ENCODE measurements at regions of chr19 and their contacts with region 1.

Region 1: GRCh38 chr19:11505032-11505503 is 571 bp downstream of the ZNF653 start:
- DNase-seq: peak; percentile 95
- H3K4me3 Mint-ChIP-seq: peak overlapping the region; percentile 85
- H3K27ac Mint-ChIP-seq: peak overlapping the region; percentile 80
- H3K4me1 Mint-ChIP-seq: peaks cover 12% of the 10 kb centered on the region
- H3K27me3 Mint-ChIP-seq: no peaks in the 10 kb centered on the region

Region 2: DNA sequence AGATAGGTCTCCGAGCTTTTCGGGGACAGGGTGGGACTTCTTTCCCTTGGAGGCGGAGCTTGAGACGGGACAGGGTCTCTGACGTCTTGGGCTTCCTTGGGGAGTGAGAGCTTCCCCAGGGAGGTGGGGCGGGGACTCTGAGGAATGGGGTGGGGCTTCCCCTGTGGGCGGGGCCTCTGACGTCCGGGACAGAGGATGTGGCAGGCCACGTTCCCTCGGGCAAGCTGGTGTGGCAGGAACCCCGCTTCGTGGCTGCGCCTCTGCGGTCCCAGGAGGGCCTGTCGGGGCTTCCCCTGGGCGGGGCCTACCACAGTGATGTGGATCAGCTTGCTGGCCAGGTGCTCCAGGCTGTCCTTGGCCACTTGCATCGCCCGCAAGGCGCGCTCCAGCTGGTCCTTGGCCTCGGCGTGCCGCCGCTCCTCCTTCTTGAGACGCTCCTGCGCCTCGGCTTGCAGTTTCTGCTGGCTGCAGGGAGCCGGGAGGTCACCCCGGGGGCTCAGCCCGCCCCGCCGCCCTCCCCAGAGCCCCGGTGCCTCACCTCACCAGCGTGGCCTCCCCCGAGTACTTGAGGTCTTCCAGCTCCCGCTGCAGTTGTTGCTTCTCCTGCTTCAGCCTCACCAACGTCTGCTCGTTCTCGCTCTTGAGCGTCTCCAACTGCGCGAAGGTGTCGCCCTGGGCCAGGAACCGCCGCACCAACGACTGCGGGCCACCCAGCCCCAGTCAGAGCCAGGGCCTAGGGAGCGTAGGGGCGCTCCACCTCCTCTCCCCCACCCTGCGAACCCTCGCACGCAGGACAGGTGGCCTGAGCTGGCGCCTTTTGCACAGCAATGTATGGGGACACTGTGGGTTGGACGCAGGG is 82.7 kb before region 1 on chr19:
- intact Hi-C with region 1: no loop called
- DNase-seq: peak; percentile 73
- H3K4me3 Mint-ChIP-seq: peak overlapping the region; percentile 68
- H3K27ac Mint-ChIP-seq: no peak overlapping the region
- H3K4me1 Mint-ChIP-seq: peaks cover 19% of the 10 kb centered on the region
- H3K27me3 Mint-ChIP-seq: peaks cover 47% of the 10 kb centered on the region

Region 3: GRCh38 chr19:11482384-11483050 is 22.6 kb before region 1 on chr19:
- intact Hi-C with region 1: loop called (anchors 1 kb)
- DNase-seq: peak; percentile 84
- H3K4me3 Mint-ChIP-seq: peak overlapping the region; percentile 81
- H3K27ac Mint-ChIP-seq: peak overlapping the region; percentile 85
- H3K4me1 Mint-ChIP-seq: peaks cover 17% of the 10 kb centered on the region
- H3K27me3 Mint-ChIP-seq: peaks cover 28% of the 10 kb centered on the region

Region 4: DNA sequence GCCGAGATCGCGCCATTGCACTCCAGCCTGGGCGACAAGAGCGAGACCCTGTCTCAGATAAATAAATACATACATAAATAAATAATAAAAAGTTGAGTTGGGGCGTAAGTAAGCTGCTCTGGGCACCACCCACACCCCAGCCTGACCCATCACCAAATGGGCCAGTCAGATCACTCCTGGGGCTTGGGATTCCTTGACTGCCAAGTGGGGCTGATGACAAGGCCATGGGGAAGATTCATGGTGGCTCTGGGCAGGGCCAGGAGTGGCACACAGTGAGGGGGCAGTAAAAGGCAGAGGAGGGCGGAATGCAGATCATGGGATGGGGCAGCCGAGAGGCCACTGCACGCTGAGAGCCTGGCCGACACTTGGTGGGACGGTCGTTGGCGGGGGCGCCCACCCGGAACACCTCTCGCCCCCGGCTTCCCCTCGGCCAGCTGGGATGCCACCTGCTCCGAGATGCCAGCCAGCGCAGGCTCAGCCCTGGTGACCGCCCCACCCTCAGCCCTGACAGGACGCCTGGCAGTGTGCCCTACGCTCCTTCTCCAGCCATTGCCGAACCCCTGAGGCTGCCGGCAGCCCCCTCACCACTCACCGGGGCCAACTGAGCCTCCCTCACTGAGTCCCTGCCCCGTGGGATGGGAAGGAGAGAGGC is 10.3 kb before region 1 on chr19:
- intact Hi-C with region 1: no loop called
- DNase-seq: no peak
- H3K4me3 Mint-ChIP-seq: no peak overlapping the region
- H3K27ac Mint-ChIP-seq: no peak overlapping the region
- H3K4me1 Mint-ChIP-seq: no peaks in the 10 kb centered on the region
- H3K27me3 Mint-ChIP-seq: no peaks in the 10 kb centered on the region

Region 5: DNA sequence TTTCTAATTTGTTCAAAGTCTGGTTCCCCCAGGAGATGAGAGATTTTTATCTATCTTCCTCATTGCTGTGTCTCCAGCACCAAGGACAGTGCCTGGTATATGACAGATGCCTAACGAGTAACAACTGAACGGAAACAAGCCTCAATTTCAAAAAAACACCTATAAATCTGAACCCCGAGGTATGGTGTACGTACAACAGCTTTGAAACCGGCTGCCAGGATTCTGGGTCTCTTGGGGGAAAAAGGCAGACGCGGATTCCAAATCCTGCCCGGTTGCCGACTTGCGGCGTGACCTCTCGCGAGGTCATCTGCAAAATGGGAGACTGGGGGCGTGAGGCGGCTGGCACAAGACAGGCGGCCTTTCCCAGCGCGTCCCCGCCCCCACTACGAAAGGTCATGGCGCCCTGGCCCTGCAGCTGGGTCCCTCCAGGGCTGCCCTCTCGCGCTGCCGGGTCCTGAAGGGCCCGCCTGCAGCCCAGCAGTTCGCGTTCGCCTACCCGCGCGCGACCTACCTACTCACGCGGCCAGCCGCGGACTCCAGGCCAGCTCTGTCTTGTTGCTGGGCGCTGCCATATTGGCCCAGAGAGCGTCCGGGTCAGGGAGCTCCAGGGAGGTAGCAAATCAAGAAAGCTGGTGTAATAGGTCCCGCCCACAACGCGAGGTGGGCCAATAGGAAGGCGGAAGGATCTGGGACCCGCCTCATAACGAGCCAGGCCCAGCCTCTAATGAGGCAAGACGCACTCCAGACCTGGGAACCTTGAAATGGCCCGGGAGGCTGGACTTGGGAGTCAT is 23.7 kb after region 1 on chr19 and contains the start of gene ECSIT:
- intact Hi-C with region 1: loop called (anchors 1 kb)
- DNase-seq: peak; percentile 90
- H3K4me3 Mint-ChIP-seq: peak within 1 kb of the TSS; percentile 90
- H3K27ac Mint-ChIP-seq: peak within 1 kb of the TSS; percentile 78
- H3K4me1 Mint-ChIP-seq: peaks cover 23% of the 10 kb centered on the region
- H3K27me3 Mint-ChIP-seq: no peaks in the 10 kb centered on the region
- total RNA-seq, gene ECSIT: 42.7 and 43.5 TPM in 2 replicates

Region 6: DNA sequence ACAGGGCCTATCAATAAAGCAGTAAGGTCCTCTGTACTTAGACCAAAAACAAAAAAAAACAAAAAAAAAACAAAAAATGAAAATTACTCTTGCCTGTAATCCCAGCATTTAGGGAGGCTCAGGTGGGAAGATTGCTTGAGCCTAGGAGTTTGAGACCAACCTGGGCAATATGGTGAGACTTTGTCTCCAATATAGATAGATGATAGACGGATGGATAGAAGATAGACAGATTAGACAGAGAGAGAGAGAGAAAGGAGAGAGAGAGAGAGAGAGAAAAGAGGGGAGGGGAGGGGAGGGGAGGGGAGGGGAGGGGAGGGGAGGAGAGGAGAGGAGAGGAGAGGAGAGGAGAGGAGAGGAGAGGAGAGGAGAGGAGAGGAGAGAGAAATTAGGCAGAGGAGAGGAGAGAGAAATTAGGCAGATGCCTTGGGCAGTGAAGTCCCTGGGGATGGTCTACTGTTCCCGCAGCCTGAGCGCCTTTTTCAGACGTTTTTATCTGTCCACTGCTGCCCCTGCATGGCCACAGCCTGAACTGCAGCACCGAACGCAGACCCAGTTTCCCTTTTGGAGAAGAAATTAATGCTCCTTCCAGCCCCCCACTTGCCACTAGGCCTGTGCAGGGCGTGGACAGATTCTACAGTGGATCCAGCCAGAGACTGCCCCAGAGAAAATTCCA is 82.4 kb after region 1 on chr19:
- intact Hi-C with region 1: loop called (anchors 5 kb)
- DNase-seq: peak; percentile 75
- H3K4me3 Mint-ChIP-seq: no peak overlapping the region
- H3K27ac Mint-ChIP-seq: peak overlapping the region; percentile 63
- H3K4me1 Mint-ChIP-seq: peaks cover 9% of the 10 kb centered on the region
- H3K27me3 Mint-ChIP-seq: no peaks in the 10 kb centered on the region